Ascending aorta (tissue), 2 donors: ENCODE measurements at regions of chr9 and their contacts with region 1.

Region 1: GRCh38 chr9:125380396-125380795 is 118.8 kb downstream of the GAPVD1 start:
- DNase-seq: no peak
- H3K4me3 ChIP-seq: no peak overlapping the region
- H3K27ac ChIP-seq: no peak overlapping the region
- H3K4me1 ChIP-seq: no peaks in the 10 kb centered on the region
- H3K27me3 ChIP-seq: no peaks in the 10 kb centered on the region
- CTCF ChIP-seq: no peak

Region 2: GRCh38 chr9:124776954-124777665 is 603.3 kb before region 1 on chr9 and contains the start of gene OLFML2A:
- intact Hi-C with region 1: loop called (anchors 5 kb)
- DNase-seq: no peak
- H3K4me3 ChIP-seq: peak within 1 kb of the TSS; percentile 61 to 67
- H3K27ac ChIP-seq: peak within 1 kb of the TSS in 1 of 2 donors; percentile 6
- H3K4me1 ChIP-seq: peaks cover 0 to 12% of the 10 kb centered on the region in 2 donors
- H3K27me3 ChIP-seq: peaks cover 8% of the 10 kb centered on the region
- CTCF ChIP-seq: peak in 1 of 3 experiments; percentile 13
- total RNA-seq, gene OLFML2A: 129 TPM

Region 3: GRCh38 chr9:125418404-125418803 is 38.0 kb after region 1 on chr9:
- intact Hi-C with region 1: no loop called
- DNase-seq: no peak
- H3K4me3 ChIP-seq: no peak overlapping the region
- H3K27ac ChIP-seq: no peak overlapping the region
- H3K4me1 ChIP-seq: no peaks in the 10 kb centered on the region
- H3K27me3 ChIP-seq: no peaks in the 10 kb centered on the region
- CTCF ChIP-seq: no peak